ENCODE measurements at regions of chr17 and their contacts with region 1.

Region 1: DNA sequence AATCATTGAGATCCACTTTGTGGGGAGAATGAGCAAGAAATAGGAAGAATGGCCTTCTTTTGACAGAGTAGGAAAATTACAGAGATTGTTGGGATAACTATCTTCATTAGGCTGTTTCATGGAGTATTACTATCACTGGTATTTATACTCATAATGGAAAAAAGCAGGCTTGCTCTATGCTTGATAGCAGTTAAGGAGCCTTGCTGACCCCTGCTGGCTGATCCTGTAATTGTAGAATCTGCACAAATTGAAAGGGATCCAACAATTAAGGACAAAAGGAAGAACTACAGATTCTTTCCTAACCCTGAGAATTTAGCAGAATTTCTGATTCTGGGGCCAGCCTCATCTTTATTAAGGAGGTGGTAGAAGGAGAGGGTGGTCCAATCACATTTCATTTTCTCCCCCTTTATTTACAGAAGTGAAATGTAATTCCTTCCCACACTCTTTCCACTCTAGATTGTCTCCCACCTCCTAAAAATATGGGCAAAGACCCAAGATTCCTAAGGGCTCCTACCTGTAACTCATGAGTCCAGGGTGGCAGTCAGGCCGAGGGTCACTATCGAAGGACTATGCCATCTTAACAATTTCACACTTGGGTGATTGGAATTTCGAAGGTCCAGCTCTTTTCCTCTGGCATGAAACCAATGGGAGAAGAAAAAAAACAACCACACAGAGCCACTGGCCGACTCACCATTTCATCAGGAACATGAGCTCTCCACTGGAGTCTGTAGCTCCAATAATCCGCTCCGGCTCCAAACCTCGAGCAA is 26.3 kb downstream of the NFE2L1 start:
- DNase-seq: peak; percentile 60 to 88
- ATAC-seq: peak; percentile 83

Region 2: DNA sequence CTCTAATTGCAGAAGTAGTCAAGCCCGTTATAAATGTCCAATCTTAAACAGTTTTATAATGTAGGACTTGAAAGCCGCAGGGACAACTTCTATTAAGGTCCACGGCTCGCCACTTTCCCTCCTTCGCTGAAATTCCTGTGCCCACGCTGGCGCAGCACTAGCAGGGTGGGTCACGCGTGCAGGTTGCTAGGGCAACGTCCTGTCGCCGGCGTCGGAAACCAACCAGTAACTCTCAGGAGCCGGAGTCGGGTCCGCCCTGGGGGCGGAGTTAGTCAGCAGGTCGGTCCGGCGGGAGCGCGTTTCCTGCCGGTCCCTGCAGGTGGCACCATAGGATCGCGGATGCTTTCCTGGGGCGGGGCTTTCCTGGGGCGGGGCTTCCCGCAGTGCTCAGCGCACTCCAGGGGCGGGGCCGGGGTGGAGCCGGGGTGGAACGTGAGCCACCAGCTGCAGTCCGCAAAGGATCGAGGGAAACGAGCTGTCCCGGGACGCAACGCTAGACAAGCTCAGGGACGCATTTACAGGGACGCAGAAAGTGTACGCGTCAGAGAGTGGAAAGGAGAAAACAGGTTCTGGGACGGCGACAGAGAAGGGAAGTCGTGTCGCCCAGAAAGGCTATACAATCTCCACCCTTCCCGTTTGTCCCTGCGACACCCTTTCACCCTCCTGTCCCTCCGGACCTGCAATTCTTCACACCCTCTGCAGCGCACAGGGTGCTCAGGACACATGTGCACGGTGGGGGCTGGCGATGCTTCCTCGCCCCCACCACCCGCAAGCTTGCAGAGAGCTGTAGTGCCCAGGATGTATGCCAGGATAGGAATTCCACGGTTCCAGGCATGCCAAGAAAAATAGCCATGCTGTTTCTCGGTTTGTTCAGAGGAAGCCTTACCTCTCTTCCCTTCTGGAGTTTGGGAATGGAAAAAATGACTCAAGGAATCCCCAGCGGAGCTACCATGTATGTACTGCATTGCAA is 49.3 kb before region 1 on chr17:
- intact Hi-C with region 1: loop called in 1 of 2 experiments (anchors 2 kb)
- DNase-seq: peak; percentile 97 to 99
- ATAC-seq: peak; percentile 79

Region 3: GRCh38 chr17:48037036-48037837 is 37.3 kb before region 1 on chr17 and contains the start of gene COPZ2:
- intact Hi-C with region 1: loop called in 1 of 2 experiments (anchors 5 kb)
- DNase-seq: peak; percentile 67 to 74
- ATAC-seq: peak; percentile 86
- total RNA-seq, gene COPZ2: 7.1 to 8.7 TPM

Region 4: GRCh38 chr17:48483471-48484131 is 409.1 kb after region 1 on chr17:
- intact Hi-C with region 1: no loop called
- DNase-seq: no peak
- ATAC-seq: no peak